HCT116 (cell line): ENCODE measurements at regions of chrX and their contacts with region 1.

Region 1: DNA sequence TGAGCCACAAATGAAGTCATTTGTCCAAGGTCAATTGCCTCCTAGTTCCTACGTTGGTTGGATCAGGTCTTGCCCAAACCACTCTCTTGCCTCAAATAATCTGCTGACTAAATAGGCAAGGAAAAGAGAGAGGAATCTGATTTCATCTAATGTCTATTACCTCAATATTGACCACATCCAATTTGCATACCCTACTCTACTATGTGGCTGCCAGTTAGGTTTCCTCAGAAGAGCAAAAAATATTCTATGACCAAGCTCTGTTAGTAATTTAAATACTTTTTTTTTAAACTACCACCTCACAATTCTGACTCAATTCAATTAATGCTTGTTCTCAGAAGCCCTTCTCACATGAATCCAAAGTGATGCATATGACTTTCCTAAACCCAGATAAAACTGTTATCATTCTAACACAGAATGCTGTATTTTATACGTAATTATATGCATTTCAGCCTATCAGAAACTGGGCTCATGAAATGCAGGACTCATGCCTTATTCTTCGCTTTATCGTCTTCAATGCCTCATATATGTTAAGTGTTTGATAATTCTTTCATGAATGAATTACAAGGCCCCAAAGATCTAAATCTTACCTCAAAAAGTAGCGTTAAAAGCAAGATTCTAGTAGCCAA is 98.6 kb downstream of the HUWE1 start:
- DNase-seq: no peak
- ATAC-seq: no peak
- H3K4me3 ChIP-seq: no peak overlapping the region
- H3K27ac ChIP-seq: no peak overlapping the region
- H3K4me1 ChIP-seq: no peaks in the 10 kb centered on the region
- H3K27me3 ChIP-seq: no peaks in the 10 kb centered on the region
- CTCF ChIP-seq: no peak
- POLR2A ChIP-seq: no peak
- RAD21 ChIP-seq: no peak

Region 2: DNA sequence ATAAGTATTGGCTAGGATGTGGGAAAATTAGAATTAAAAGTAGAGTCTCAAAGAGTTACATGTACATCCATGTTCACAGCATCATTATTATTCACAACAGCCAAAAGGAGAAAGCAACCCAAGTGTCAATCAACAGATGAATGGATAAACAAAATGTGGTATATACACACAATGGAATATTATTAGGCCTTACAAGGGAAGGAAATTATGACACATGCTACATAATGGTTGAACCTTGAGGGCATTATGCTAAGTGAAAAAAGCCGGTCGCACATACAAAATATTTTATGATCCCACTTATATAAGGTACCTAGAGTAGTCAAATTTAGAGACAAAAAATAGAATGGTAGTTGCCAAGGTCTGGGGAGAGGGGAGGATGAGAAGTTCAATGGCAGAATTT is 18.5 kb after region 1 on chrX:
- CTCF ChIA-PET with region 1: no interaction called
- POLR2A ChIA-PET with region 1: no interaction called
- RAD21 ChIA-PET with region 1: no interaction called
- intact Hi-C with region 1: loop called (anchors 1 kb)
- DNase-seq: no peak
- ATAC-seq: no peak
- H3K4me3 ChIP-seq: no peak overlapping the region
- H3K27ac ChIP-seq: no peak overlapping the region
- H3K4me1 ChIP-seq: no peaks in the 10 kb centered on the region
- H3K27me3 ChIP-seq: no peaks in the 10 kb centered on the region
- CTCF ChIP-seq: no peak
- POLR2A ChIP-seq: no peak
- RAD21 ChIP-seq: no peak

Region 3: DNA sequence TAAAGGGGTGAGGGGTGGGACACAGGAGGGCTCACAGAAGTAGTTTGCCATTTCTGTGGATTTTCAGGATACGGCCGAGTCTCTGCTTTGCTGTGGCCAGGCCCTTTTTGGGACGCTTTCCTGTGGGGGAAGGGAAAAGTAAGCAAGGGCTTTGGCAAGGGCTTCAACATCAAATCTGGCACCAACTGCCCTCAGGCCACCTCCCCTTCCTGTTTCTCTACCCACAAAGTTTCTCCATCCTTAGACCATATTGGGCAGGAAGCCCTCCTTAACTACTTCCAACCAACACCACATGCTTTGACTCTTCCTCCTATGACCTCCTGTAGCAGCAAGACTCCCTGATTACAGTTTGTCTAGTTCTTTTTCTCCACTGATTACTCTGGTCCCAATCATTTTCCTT is 351.2 kb after region 1 on chrX:
- CTCF ChIA-PET with region 1: no interaction called
- POLR2A ChIA-PET with region 1: no interaction called
- RAD21 ChIA-PET with region 1: no interaction called
- intact Hi-C with region 1: no loop called
- DNase-seq: no peak
- ATAC-seq: no peak
- H3K4me3 ChIP-seq: no peak overlapping the region
- H3K27ac ChIP-seq: no peak overlapping the region
- H3K4me1 ChIP-seq: no peaks in the 10 kb centered on the region
- H3K27me3 ChIP-seq: no peaks in the 10 kb centered on the region
- CTCF ChIP-seq: no peak
- POLR2A ChIP-seq: no peak
- RAD21 ChIP-seq: no peak